T-cell (primary cell): ENCODE measurements at regions of chr4 and their contacts with region 1.

Region 1: GRCh38 chr4:48766131-48766792 is 13.8 kb downstream of the FRYL start:
- DNase-seq: no peak
- ATAC-seq: peak in 1 of 4 experiments; percentile 20
- H3K4me3 ChIP-seq: no peak overlapping the region
- H3K4me3 Mint-ChIP-seq: peak overlapping the region in 2 of 3 donors; percentile 28 to 41
- H3K27ac ChIP-seq: no peak overlapping the region
- H3K27ac Mint-ChIP-seq: no peak overlapping the region
- H3K4me1 ChIP-seq: peaks cover 2 to 20% of the 10 kb centered on the region in 2 experiments
- H3K4me1 Mint-ChIP-seq: peaks cover 67 to 75% (median 75%) of the 10 kb centered on the region in 3 donors
- H3K27me3 ChIP-seq: no peaks in the 10 kb centered on the region
- H3K27me3 Mint-ChIP-seq: no peaks in the 10 kb centered on the region

Region 2: GRCh38 chr4:48779998-48780742 is 13.9 kb after region 1 on chr4 and contains the start of gene FRYL:
- CTCF ChIA-PET with region 1: no interaction called
- POLR2A ChIA-PET with region 1: interaction called, 9 to 11 read pairs
- DNase-seq: peak; percentile 94 to 100 (median 97)
- ATAC-seq: peak; percentile 88 to 90 (median 88)
- H3K4me3 ChIP-seq: peak within 1 kb of the TSS; percentile 83 to 99
- H3K4me3 Mint-ChIP-seq: peak within 1 kb of the TSS; percentile 75 to 94 (median 90)
- H3K27ac ChIP-seq: peak within 1 kb of the TSS; percentile 69
- H3K27ac Mint-ChIP-seq: peak within 1 kb of the TSS; percentile 89 to 95
- H3K4me1 ChIP-seq: peaks cover 10 to 29% of the 10 kb centered on the region in 2 experiments
- H3K4me1 Mint-ChIP-seq: peaks cover 44 to 47% (median 45%) of the 10 kb centered on the region in 3 donors
- H3K27me3 ChIP-seq: no peaks in the 10 kb centered on the region
- H3K27me3 Mint-ChIP-seq: no peaks in the 10 kb centered on the region
- total RNA-seq, gene FRYL: 86.3 to 143 (median 111) TPM

Region 3: GRCh38 chr4:48813964-48814363 is 47.7 kb after region 1 on chr4:
- CTCF ChIA-PET with region 1: no interaction called
- POLR2A ChIA-PET with region 1: no interaction called
- DNase-seq: no peak
- ATAC-seq: no peak
- H3K4me3 ChIP-seq: no peak overlapping the region
- H3K4me3 Mint-ChIP-seq: no peak overlapping the region
- H3K27ac ChIP-seq: no peak overlapping the region
- H3K27ac Mint-ChIP-seq: no peak overlapping the region
- H3K4me1 ChIP-seq: no peaks in the 10 kb centered on the region
- H3K4me1 Mint-ChIP-seq: peaks cover 4 to 8% (median 5%) of the 10 kb centered on the region in 3 donors
- H3K27me3 ChIP-seq: peaks cover 0 to 18% of the 10 kb centered on the region in 2 experiments
- H3K27me3 Mint-ChIP-seq: peaks cover 9 to 11% of the 10 kb centered on the region in 2 donors